ENCODE measurements at regions of chrX and their contacts with region 1.

Region 1: GRCh38 chrX:41558531-41558930 is 111.4 kb downstream of the NYX start:
- DNase-seq: no peak
- H3K4me3 ChIP-seq: no peak overlapping the region
- H3K27ac ChIP-seq: no peak overlapping the region
- H3K4me1 ChIP-seq: peaks cover 10 to 30% of the 10 kb centered on the region in 2 donors
- H3K27me3 ChIP-seq: no peaks in the 10 kb centered on the region
- CTCF ChIP-seq: peak in 5 of 6 experiments; percentile 51 to 60 (median 57)
- POLR2A ChIP-seq: no peak

Region 2: GRCh38 chrX:41381685-41382084 is 176.8 kb before region 1 on chrX:
- intact Hi-C with region 1: no loop called
- DNase-seq: peak; percentile 20 to 73 (median 59)
- H3K4me3 ChIP-seq: no peak overlapping the region
- H3K27ac ChIP-seq: peak overlapping the region in 2 of 5 donors; percentile 26 to 49
- H3K4me1 ChIP-seq: no peaks in the 10 kb centered on the region
- H3K27me3 ChIP-seq: no peaks in the 10 kb centered on the region
- CTCF ChIP-seq: no peak
- POLR2A ChIP-seq: no peak

Region 3: DNA sequence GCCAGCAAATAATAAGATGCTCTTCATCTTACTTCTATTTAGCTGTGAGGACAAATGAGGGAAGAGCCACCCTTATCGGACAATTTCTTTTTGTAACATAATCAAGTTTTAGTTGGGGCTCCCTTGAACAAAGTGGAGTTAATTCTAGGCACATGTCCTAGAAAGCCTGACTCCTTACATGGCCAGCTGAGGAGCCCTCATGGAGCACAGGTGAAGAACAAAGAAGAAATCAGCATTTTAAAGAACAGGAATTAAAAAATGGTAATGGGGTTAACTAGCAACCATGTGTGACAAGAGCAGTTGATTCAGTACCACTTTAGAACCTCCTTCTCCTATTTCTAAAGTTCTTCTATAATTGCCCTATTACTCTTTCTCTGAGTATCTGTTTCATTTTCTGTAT is 181.3 kb after region 1 on chrX:
- intact Hi-C with region 1: loop called in 1 of 2 experiments (anchors 10 kb)
- DNase-seq: no peak
- H3K4me3 ChIP-seq: no peak overlapping the region
- H3K27ac ChIP-seq: no peak overlapping the region
- H3K4me1 ChIP-seq: no peaks in the 10 kb centered on the region
- H3K27me3 ChIP-seq: no peaks in the 10 kb centered on the region
- CTCF ChIP-seq: no peak
- POLR2A ChIP-seq: no peak

Measured in adrenal gland (tissue), 19 donors.